ENCODE measurements at regions of chr3 and their contacts with region 1.

Region 1: GRCh38 chr3:53709860-53710674 is 136.2 kb downstream of the CHDH start:
- DNase-seq: peak; percentile 51 to 54
- H3K4me3 ChIP-seq: no peak overlapping the region
- H3K27ac ChIP-seq: no peak overlapping the region
- H3K4me1 ChIP-seq: no peaks in the 10 kb centered on the region
- H3K27me3 ChIP-seq: peaks cover 41% of the 10 kb centered on the region
- CTCF ChIP-seq: peak; percentile 73

Region 2: GRCh38 chr3:53114011-53114400 is 596.1 kb before region 1 on chr3:
- CTCF ChIA-PET with region 1: no interaction called
- POLR2A ChIA-PET with region 1: no interaction called
- intact Hi-C with region 1: loop called (anchors 1 kb)
- DNase-seq: peak; percentile 45 to 69
- H3K4me3 ChIP-seq: no peak overlapping the region
- H3K27ac ChIP-seq: peak overlapping the region; percentile 42
- H3K4me1 ChIP-seq: peaks cover 27% of the 10 kb centered on the region
- H3K27me3 ChIP-seq: no peaks in the 10 kb centered on the region
- CTCF ChIP-seq: peak; percentile 89

Region 3: GRCh38 chr3:53195602-53196574 is 514.2 kb before region 1 on chr3:
- CTCF ChIA-PET with region 1: no interaction called
- POLR2A ChIA-PET with region 1: no interaction called
- intact Hi-C with region 1: loop called (anchors 10 kb)
- DNase-seq: peak in 1 of 2 experiments; percentile 51
- H3K4me3 ChIP-seq: no peak overlapping the region
- H3K27ac ChIP-seq: no peak overlapping the region
- H3K4me1 ChIP-seq: peaks cover 8% of the 10 kb centered on the region
- H3K27me3 ChIP-seq: no peaks in the 10 kb centered on the region
- CTCF ChIP-seq: peak; percentile 93

Region 4: DNA sequence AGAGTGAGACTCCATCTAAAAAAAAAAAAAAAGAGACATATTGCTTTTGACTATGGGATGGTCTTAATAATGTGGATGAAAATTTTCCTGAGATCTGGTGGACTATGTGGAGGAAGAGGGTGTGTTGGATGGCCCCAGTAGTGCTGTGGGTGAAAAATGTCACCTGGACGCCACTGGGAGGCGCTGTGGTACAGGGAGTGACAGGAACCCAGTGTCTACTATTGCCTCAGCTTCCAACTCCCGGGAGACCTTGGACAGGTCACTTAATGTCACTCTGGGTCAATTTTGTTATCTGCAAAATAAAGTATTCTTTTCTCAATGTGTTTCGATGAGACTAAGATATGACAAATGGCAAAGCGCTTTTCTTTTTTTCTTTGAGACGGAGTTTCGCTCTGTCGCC is 335.0 kb before region 1 on chr3:
- CTCF ChIA-PET with region 1: no interaction called
- POLR2A ChIA-PET with region 1: no interaction called
- intact Hi-C with region 1: loop called (anchors 10 kb)
- DNase-seq: peak in 1 of 2 experiments; percentile 28
- H3K4me3 ChIP-seq: no peak overlapping the region
- H3K27ac ChIP-seq: no peak overlapping the region
- H3K4me1 ChIP-seq: no peaks in the 10 kb centered on the region
- H3K27me3 ChIP-seq: peaks cover 57% of the 10 kb centered on the region
- CTCF ChIP-seq: peak; percentile 73

Region 5: DNA sequence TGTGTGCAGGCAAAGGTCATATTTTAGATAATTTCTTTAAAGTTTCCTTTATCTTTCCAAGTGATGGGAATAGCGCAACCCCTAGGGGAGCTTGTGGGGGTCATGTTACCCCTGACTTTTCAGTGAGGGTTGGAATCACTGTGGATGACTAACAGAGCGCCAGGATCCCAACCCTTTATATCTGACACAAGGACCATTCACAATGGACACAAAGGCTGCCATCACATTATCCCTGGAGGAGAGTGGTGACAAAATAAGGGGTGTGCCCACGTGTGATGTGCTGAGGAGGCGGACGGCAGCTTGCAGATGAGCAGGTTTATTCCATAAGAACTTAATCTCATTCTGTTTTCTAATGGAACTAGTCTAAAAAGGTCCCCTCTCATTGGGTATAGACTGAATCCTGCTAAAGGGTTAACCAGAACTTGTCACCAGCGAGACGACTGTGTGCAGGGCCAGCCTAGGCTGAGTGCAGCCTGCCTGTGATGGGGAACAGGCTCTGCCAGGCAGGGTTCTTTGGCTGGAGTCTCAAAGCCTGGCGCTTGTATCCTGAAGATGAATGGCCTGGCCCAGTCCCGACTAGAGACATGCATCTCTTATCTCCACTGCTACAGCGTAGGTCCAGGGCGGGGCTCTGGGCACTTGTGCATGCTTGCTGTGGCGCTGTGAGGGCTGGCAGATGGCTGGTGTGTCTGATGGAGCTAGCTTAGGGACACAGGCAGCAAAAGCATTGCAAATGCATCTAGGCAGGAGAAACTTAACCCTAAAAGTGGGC is 85.9 kb after region 1 on chr3:
- CTCF ChIA-PET with region 1: no interaction called
- POLR2A ChIA-PET with region 1: no interaction called
- intact Hi-C with region 1: no loop called
- DNase-seq: no peak
- H3K4me3 ChIP-seq: no peak overlapping the region
- H3K27ac ChIP-seq: no peak overlapping the region
- H3K4me1 ChIP-seq: no peaks in the 10 kb centered on the region
- H3K27me3 ChIP-seq: peaks cover 92% of the 10 kb centered on the region
- CTCF ChIP-seq: no peak

Region 6: DNA sequence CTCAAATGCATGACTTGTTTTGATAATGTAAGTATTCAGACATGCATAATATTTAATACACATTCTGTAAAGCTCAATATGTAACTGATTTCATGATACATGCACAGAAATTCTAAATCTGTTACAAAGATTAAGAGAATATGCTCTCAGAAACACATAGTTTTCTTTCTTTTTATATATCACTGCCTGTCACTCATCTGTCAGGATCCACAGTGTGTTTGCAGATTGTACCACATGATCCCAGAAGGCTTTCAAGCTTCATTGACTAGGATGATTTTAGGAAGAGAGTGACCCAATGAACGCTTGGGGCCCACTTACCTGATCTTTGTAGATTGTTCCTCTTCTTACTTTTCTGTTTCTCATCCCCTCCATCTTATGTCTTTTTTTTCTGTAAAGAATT is 674.2 kb after region 1 on chr3:
- CTCF ChIA-PET with region 1: no interaction called
- POLR2A ChIA-PET with region 1: no interaction called
- intact Hi-C with region 1: no loop called
- DNase-seq: no peak
- H3K4me3 ChIP-seq: no peak overlapping the region
- H3K27ac ChIP-seq: no peak overlapping the region
- H3K4me1 ChIP-seq: no peaks in the 10 kb centered on the region
- H3K27me3 ChIP-seq: peaks cover 30% of the 10 kb centered on the region
- CTCF ChIP-seq: no peak

Measured in PC-9 (cell line).